Common myeloid progenitor, CD34-positive (primary cell): ENCODE measurements at regions of chr12 and their contacts with region 1.

Region 1: GRCh38 chr12:54579696-54580333 is 8.6 kb downstream of the PPP1R1A start:
- DNase-seq: peak; percentile 73 to 83 (median 80)
- H3K4me3 ChIP-seq: peak overlapping the region in 1 of 7 experiments; percentile 14
- H3K27ac ChIP-seq: no peak overlapping the region
- H3K4me1 ChIP-seq: peaks cover 0 to 4% (median 0%) of the 10 kb centered on the region in 4 experiments
- H3K27me3 ChIP-seq: peaks cover 0 to 7% (median 5%) of the 10 kb centered on the region in 5 experiments

Region 2: GRCh38 chr12:54565310-54565985 is 14.4 kb before region 1 on chr12:
- CTCF ChIA-PET with region 1: interaction called, 12 read pairs
- POLR2A ChIA-PET with region 1: no interaction called
- DNase-seq: no peak
- H3K4me3 ChIP-seq: no peak overlapping the region
- H3K27ac ChIP-seq: no peak overlapping the region
- H3K4me1 ChIP-seq: peaks cover 11 to 13% (median 12%) of the 10 kb centered on the region in 4 experiments
- H3K27me3 ChIP-seq: no peaks in the 10 kb centered on the region

Region 3: GRCh38 chr12:54596526-54596946 is 16.7 kb after region 1 on chr12:
- CTCF ChIA-PET with region 1: interaction called, 52 read pairs
- POLR2A ChIA-PET with region 1: no interaction called
- DNase-seq: peak; percentile 48 to 65 (median 57)
- H3K4me3 ChIP-seq: no peak overlapping the region
- H3K27ac ChIP-seq: no peak overlapping the region
- H3K4me1 ChIP-seq: no peaks in the 10 kb centered on the region
- H3K27me3 ChIP-seq: peaks cover 0 to 12% (median 0%) of the 10 kb centered on the region in 5 experiments